ENCODE measurements at regions of chr1 and their contacts with region 1.

Region 1: GRCh38 chr1:202056644-202057461 is 46.5 kb downstream of the ELF3 start:
- DNase-seq: peak; percentile 76
- ATAC-seq: peak; percentile 84
- H3K4me3 ChIP-seq: peak overlapping the region; percentile 11 to 43; a peak in 3 of 4 replicates
- H3K27ac ChIP-seq: peak overlapping the region; percentile 91
- H3K4me1 ChIP-seq: peaks cover 49 to 60% of the 10 kb centered on the region in 2 experiments
- H3K27me3 ChIP-seq: no peaks in the 10 kb centered on the region
- CTCF ChIP-seq: no peak
- POLR2A ChIP-seq: no peak
- RAD21 ChIP-seq: no peak

Region 2: GRCh38 chr1:202034683-202035462 is 22.0 kb before region 1 on chr1:
- CTCF ChIA-PET with region 1: no interaction called
- POLR2A ChIA-PET with region 1: interaction called, 13 read pairs
- RAD21 ChIA-PET with region 1: no interaction called
- intact Hi-C with region 1: no loop called
- DNase-seq: peak; percentile 91
- ATAC-seq: peak; percentile 93
- H3K4me3 ChIP-seq: peak overlapping the region; percentile 20 to 44; a peak in 3 of 4 replicates
- H3K27ac ChIP-seq: peak overlapping the region; percentile 93
- H3K4me1 ChIP-seq: peaks cover 44 to 63% of the 10 kb centered on the region in 2 experiments
- H3K27me3 ChIP-seq: no peaks in the 10 kb centered on the region
- CTCF ChIP-seq: no peak
- POLR2A ChIP-seq: no peak
- RAD21 ChIP-seq: peak; percentile 24; the same call in 1 of the 2 replicates

Region 3: DNA sequence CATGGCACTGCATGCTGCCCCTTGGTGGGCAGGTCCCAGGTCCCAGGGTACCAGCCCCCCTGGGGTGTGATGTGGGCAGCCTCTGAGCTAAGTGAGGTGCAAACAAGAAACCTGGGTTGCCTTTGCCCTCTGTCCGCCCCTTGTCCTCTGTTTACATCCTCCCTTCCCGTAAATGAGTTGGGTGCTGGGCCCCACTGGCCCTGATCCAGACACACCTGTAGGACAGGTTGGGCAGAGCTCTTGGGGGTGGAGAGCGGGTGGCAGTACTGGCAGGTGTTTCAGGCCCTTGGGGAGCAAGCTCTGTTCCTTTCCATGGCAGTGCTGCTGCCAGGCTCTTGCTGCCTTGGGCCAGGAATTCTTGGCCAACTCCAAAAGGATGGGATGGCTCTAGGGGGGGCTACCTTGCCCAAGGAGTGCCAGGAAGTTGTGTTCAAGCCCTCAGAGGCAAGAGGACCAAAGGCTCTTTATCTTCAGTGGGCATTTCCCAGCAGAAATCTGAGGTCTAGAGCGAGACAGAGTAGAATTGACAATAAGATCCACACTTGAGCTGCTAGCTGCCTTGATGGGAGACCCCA is 10.5 kb before region 1 on chr1:
- CTCF ChIA-PET with region 1: interaction called, 6 read pairs
- POLR2A ChIA-PET with region 1: interaction called, 13 read pairs
- RAD21 ChIA-PET with region 1: no interaction called
- intact Hi-C with region 1: no loop called
- DNase-seq: no peak
- ATAC-seq: peak; percentile 39
- H3K4me3 ChIP-seq: peak overlapping the region in 1 of 2 experiments; percentile 15; a peak in 1 of 4 replicates
- H3K27ac ChIP-seq: peak overlapping the region; percentile 63
- H3K4me1 ChIP-seq: peaks cover 47 to 79% of the 10 kb centered on the region in 2 experiments
- H3K27me3 ChIP-seq: no peaks in the 10 kb centered on the region
- CTCF ChIP-seq: no peak
- POLR2A ChIP-seq: no peak
- RAD21 ChIP-seq: peak; percentile 11; the same call in 1 of the 2 replicates

Region 4: GRCh38 chr1:202105539-202106276 is 48.9 kb after region 1 on chr1:
- CTCF ChIA-PET with region 1: no interaction called
- POLR2A ChIA-PET with region 1: interaction called, 4 read pairs
- RAD21 ChIA-PET with region 1: interaction called in 1 of 2 experiments, 4 read pairs
- intact Hi-C with region 1: loop called (anchors 5 kb)
- DNase-seq: peak; percentile 88
- ATAC-seq: peak; percentile 83
- H3K4me3 ChIP-seq: peak overlapping the region; percentile 22 to 40
- H3K27ac ChIP-seq: peak overlapping the region; percentile 86
- H3K4me1 ChIP-seq: peaks cover 58 to 71% of the 10 kb centered on the region in 2 experiments
- H3K27me3 ChIP-seq: no peaks in the 10 kb centered on the region
- CTCF ChIP-seq: no peak
- POLR2A ChIP-seq: no peak
- RAD21 ChIP-seq: no peak

Measured in HCT116 (cell line).